ENCODE measurements at regions of chr6 and their contacts with region 1.

Region 1: GRCh38 chr6:24720604-24721460 is 1.9 kb upstream of the C6orf62 start:
- DNase-seq: peak; percentile 100
- H3K4me3 Mint-ChIP-seq: peak overlapping the region; percentile 100
- H3K27ac Mint-ChIP-seq: peak overlapping the region; percentile 96
- H3K4me1 Mint-ChIP-seq: peaks cover 47% of the 10 kb centered on the region
- H3K27me3 Mint-ChIP-seq: no peaks in the 10 kb centered on the region

Region 2: DNA sequence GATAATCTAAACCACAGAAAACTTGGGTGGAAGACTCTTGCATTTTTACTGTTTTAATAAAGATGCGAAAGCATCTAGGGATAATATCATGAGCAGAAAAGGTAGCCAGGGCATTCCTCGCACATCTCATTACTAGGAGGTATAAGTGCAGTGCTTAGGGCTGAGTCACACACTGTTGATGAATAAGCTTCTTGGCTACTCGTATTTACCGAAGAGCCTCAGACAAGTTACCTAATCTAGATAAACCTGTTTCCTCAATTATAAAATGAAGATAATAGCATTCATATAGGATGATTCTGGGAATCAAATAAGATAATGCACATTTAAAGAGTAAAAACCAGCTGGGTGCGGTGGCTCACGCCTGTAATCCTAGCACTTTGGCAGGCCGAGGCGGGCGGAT is 74.0 kb before region 1 on chr6:
- intact Hi-C with region 1: loop called (anchors 5 kb)
- DNase-seq: no peak
- H3K4me3 Mint-ChIP-seq: peak overlapping the region; percentile 86
- H3K27ac Mint-ChIP-seq: peak overlapping the region; percentile 72
- H3K4me1 Mint-ChIP-seq: peaks cover 18% of the 10 kb centered on the region
- H3K27me3 Mint-ChIP-seq: peaks cover 20% of the 10 kb centered on the region

Region 3: DNA sequence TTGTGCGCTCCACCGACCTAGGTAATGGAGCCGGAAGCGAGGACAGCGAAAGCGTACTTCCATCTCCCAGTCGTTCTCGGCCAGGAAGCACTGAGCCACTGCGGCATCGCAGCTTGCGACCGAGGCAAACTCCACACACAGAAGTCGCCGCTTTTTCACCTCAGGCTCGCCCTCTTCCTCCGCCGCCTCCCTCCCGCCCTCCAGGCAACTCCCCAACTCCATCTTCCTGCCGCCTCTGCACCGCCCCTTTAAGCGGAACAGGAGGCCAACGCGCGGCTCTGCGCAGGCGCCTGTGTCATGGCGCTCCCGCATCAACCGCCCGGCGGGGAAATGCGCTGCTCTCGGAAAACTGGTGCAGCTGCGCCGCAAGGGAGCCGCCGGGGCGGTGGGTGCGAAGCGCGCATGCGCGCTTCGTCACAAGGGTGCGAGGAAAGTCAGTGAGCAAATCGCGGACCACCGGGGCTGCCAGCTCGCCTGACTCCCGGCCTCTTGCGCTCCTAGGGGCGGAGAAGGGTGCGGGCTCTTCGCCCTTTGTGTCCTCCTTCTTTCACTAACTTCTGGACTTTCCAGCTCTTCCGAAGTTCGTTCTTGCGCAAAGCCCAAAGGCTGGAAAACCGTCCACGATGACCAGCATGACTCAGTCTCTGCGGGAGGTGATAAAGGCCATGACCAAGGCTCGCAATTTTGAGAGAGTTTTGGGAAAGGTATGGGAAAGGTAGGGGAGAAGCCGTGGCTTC is 54.0 kb before region 1 on chr6 and contains the starts of genes ACOT13 and TDP2:
- intact Hi-C with region 1: loop called (anchors 1 kb)
- DNase-seq: peak; percentile 97
- H3K4me3 Mint-ChIP-seq: peak within 1 kb of the TSS; percentile 92
- H3K27ac Mint-ChIP-seq: peak within 1 kb of the TSS; percentile 99
- H3K4me1 Mint-ChIP-seq: peaks cover 61% of the 10 kb centered on the region
- H3K27me3 Mint-ChIP-seq: no peaks in the 10 kb centered on the region
- total RNA-seq, gene ACOT13: 27.0 and 27.4 TPM in 2 replicates
- total RNA-seq, gene TDP2: 46.1 and 47.4 TPM in 2 replicates

Region 4: GRCh38 chr6:24743265-24743943 is 22.6 kb after region 1 on chr6:
- intact Hi-C with region 1: loop called (anchors 1 kb)
- DNase-seq: no peak
- H3K4me3 Mint-ChIP-seq: no peak overlapping the region
- H3K27ac Mint-ChIP-seq: peak overlapping the region; percentile 63
- H3K4me1 Mint-ChIP-seq: peaks cover 24% of the 10 kb centered on the region
- H3K27me3 Mint-ChIP-seq: no peaks in the 10 kb centered on the region

Region 5: GRCh38 chr6:24766680-24767462 is 46.0 kb after region 1 on chr6:
- intact Hi-C with region 1: no loop called
- DNase-seq: no peak
- H3K4me3 Mint-ChIP-seq: no peak overlapping the region
- H3K27ac Mint-ChIP-seq: no peak overlapping the region
- H3K4me1 Mint-ChIP-seq: peaks cover 9% of the 10 kb centered on the region
- H3K27me3 Mint-ChIP-seq: no peaks in the 10 kb centered on the region

Region 6: GRCh38 chr6:25122001-25122400 is 401.2 kb after region 1 on chr6:
- intact Hi-C with region 1: loop called (anchors 5 kb)
- DNase-seq: no peak
- H3K4me3 Mint-ChIP-seq: no peak overlapping the region
- H3K27ac Mint-ChIP-seq: no peak overlapping the region
- H3K4me1 Mint-ChIP-seq: peaks cover 72% of the 10 kb centered on the region
- H3K27me3 Mint-ChIP-seq: no peaks in the 10 kb centered on the region